ENCODE measurements at regions of chr19 and their contacts with region 1.

Region 1: GRCh38 chr19:46537136-46538097 is 41.8 kb upstream of the PNMA8B start:
- DNase-seq: peak in 4 of 5 donors; percentile 45 to 53 (median 48)
- H3K4me3 ChIP-seq: no peak overlapping the region
- H3K4me3 Mint-ChIP-seq: no peak overlapping the region
- H3K27ac ChIP-seq: no peak overlapping the region
- H3K27ac Mint-ChIP-seq: peak overlapping the region in 1 of 7 donors; percentile 1
- H3K4me1 ChIP-seq: peaks cover under 1% of the 10 kb centered on the region
- H3K4me1 Mint-ChIP-seq: peaks cover under 1 to 5% (median 3%) of the 10 kb centered on the region in 4 donors
- H3K27me3 ChIP-seq: no peaks in the 10 kb centered on the region
- H3K27me3 Mint-ChIP-seq: peaks cover 0 to 5% of the 10 kb centered on the region in 2 donors

Region 2: DNA sequence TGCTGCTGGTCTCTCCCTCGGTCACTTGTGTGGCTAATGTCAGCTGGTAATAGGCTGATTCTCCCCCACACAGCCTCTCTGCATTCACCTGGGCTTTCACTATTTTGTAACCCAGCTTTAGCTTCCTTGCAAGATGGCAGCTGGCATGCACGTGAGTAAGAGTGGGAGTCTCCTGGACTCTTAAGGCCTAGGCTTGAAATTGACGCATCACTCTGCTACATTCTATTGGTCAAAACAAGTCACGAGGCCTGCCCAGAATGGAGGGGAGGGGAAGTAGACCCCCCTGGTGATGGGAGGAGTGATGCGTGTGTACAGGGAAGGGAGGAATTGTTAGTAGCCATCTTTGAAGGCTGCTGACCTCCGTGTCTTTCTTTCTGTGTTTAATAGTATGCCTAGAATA is 16.8 kb before region 1 on chr19:
- CTCF ChIA-PET with region 1: interaction called, 77 read pairs
- POLR2A ChIA-PET with region 1: interaction called, 4 read pairs
- intact Hi-C with region 1: loop called (anchors 1 kb)
- DNase-seq: no peak
- H3K4me3 ChIP-seq: no peak overlapping the region
- H3K4me3 Mint-ChIP-seq: peak overlapping the region in 1 of 8 donors; percentile 45
- H3K27ac ChIP-seq: no peak overlapping the region
- H3K27ac Mint-ChIP-seq: peak overlapping the region in 3 of 7 donors; percentile 22 to 81 (median 78)
- H3K4me1 ChIP-seq: peaks cover 57% of the 10 kb centered on the region
- H3K4me1 Mint-ChIP-seq: peaks cover 22 to 68% (median 45%) of the 10 kb centered on the region in 4 donors
- H3K27me3 ChIP-seq: no peaks in the 10 kb centered on the region
- H3K27me3 Mint-ChIP-seq: peaks cover 0 to 3% of the 10 kb centered on the region in 2 donors

Region 3: GRCh38 chr19:46551164-46551563 is 13.7 kb after region 1 on chr19:
- CTCF ChIA-PET with region 1: interaction called, 37 read pairs
- POLR2A ChIA-PET with region 1: no interaction called
- intact Hi-C with region 1: no loop called
- DNase-seq: no peak
- H3K4me3 ChIP-seq: no peak overlapping the region
- H3K4me3 Mint-ChIP-seq: no peak overlapping the region
- H3K27ac ChIP-seq: no peak overlapping the region
- H3K27ac Mint-ChIP-seq: no peak overlapping the region
- H3K4me1 ChIP-seq: no peaks in the 10 kb centered on the region
- H3K4me1 Mint-ChIP-seq: no peaks in the 10 kb centered on the region
- H3K27me3 ChIP-seq: no peaks in the 10 kb centered on the region
- H3K27me3 Mint-ChIP-seq: peaks cover 12 to 15% of the 10 kb centered on the region in 2 donors